Activated CD4-positive, alpha-beta T cell treated with anti-CD3 and anti-CD28 coated beads, Interleukin-2, amount 10 ng/mL, durations not matched to agents 24 days and 14 days (primary cell): ENCODE measurements at regions of chr12 and their contacts with region 1.

Region 1: DNA sequence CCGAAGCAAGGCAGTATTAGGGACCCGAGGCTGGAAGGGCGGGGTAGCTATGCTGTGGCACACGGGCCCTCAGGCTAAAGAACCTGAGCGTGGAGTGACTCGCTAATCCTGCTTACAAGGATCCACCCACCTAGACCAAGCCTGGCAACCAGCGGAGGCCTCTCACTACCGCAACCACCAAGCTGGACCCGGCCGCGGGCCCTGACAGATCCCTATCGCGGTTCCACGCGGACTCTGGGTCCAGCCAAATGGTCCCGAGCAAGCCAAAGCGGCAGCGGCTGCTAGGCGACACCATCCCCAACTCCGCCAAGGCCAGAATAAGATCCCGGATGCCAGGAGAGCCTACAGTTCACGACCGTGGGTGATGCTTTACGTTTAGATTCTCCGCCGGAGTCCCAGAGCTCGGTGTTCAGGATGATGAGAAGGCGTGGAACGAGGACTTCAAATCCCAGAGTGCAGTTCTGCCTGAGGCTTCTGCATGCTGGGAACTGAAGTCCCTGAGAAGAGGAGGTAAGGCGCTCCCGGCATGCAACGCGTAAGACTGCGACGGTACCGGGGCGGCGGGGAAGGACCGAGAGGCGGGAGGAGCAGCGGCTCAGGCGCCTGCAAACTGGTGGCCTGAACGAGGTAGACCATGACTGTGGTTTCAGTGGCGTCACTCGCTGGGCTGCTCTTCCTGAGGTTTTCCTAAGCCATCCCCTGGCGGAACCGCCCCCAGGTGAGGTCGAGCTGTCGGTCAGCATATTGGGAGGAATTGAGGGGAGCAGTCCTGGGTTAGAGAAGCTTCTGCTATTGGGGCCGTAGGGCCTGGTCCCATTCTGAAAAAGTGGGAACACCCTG is at the starts of genes CEP290 and TMTC3:
- DNase-seq: peak; percentile 97
- H3K4me3 Mint-ChIP-seq: peak within 1 kb of the TSS; percentile 91
- H3K27ac Mint-ChIP-seq: peak within 1 kb of the TSS; percentile 96
- H3K4me1 Mint-ChIP-seq: peaks cover 32% of the 10 kb centered on the region
- H3K27me3 Mint-ChIP-seq: no peaks in the 10 kb centered on the region
- total RNA-seq, gene CEP290: 17.2 and 17.9 TPM in 2 replicates
- total RNA-seq, gene TMTC3: 8.2 and 8.3 TPM in 2 replicates

Region 2: DNA sequence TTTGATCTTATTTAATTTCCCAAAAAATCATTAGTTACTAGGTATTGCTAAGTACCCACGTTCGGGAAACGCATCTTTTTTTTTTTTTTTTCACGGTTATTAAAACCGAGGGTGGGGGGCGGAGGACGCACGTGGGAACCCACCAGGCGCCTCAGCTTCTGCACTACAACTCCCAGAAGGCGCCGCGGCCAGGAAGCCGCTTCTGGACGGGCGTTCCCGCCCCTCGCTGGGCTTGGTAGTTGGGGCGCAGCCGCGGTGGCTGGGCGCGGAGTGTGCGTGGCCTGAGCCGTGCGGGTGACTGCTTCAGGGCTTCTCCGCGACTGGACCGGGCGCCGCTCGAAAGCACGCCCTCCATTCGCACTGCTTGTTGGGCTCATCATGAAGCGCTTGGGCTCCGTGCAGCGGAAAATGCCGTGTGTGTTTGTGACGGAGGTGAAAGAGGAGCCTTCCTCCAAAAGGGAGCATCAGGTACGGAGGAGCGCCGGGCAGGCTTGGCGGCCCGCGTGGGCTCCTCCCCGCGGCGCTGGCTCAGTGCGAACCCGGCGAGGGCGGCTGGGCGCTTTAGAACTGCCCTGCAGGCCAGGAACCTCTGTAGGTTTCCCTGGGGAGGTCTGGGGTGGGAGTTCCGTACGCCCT is 106.6 kb before region 1 on chr12:
- intact Hi-C with region 1: loop called (anchors 1 kb)
- DNase-seq: peak; percentile 97
- H3K4me3 Mint-ChIP-seq: peak overlapping the region; percentile 99
- H3K27ac Mint-ChIP-seq: peak overlapping the region; percentile 98
- H3K4me1 Mint-ChIP-seq: peaks cover 40% of the 10 kb centered on the region
- H3K27me3 Mint-ChIP-seq: no peaks in the 10 kb centered on the region

Region 3: GRCh38 chr12:88111074-88111652 is 30.8 kb before region 1 on chr12:
- intact Hi-C with region 1: loop called (anchors 2 kb)
- DNase-seq: no peak
- H3K4me3 Mint-ChIP-seq: no peak overlapping the region
- H3K27ac Mint-ChIP-seq: no peak overlapping the region
- H3K4me1 Mint-ChIP-seq: no peaks in the 10 kb centered on the region
- H3K27me3 Mint-ChIP-seq: no peaks in the 10 kb centered on the region

Region 4: GRCh38 chr12:88241862-88242570 is 100.0 kb after region 1 on chr12:
- intact Hi-C with region 1: loop called (anchors 5 kb)
- DNase-seq: no peak
- H3K4me3 Mint-ChIP-seq: no peak overlapping the region
- H3K27ac Mint-ChIP-seq: peak overlapping the region; percentile 89
- H3K4me1 Mint-ChIP-seq: peaks cover 19% of the 10 kb centered on the region
- H3K27me3 Mint-ChIP-seq: no peaks in the 10 kb centered on the region

Region 5: DNA sequence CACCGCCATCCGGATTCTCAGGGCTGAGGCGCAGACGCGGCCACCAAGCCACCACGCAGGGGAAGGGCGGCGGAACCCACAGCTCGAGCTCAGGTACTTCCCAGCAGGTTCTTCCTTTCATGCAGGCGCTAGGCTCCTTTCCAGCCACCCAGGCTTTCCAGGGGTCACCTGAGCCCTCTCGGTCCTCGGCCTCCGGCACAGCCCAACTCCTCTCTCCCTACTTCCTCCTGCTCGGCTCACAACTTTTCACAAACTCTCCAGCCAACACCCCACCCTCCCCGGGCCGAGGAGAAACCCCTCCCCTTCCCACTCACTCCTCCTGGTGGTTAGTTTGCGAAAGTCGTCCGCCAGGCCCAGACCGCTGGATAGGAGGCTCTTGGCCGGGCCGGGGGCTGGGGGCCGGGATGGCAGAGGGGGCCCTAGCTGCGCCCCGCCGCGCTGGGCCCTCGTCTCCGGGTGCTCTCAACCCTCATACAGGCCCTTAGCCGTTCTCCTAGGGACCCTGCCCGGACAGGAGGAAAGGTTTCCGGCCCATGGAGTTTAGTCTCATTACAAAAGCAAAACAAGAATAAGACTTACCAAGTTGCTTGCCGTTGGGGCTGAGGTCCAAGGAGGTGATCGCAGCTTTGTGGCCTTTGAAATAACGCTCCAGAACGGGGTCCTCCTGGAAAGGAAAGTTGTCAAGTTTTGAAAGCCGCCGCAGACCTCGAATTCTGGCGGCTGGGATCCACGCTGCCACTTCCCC is 1382.7 kb after region 1 on chr12 and contains the start of gene GALNT4:
- intact Hi-C with region 1: loop called (anchors 1 kb)
- DNase-seq: peak; percentile 94
- H3K4me3 Mint-ChIP-seq: peak within 1 kb of the TSS; percentile 98
- H3K27ac Mint-ChIP-seq: peak within 1 kb of the TSS; percentile 99
- H3K4me1 Mint-ChIP-seq: peaks cover 49% of the 10 kb centered on the region
- H3K27me3 Mint-ChIP-seq: no peaks in the 10 kb centered on the region
- total RNA-seq, gene GALNT4: 6.9 and 7.6 TPM in 2 replicates